Stomach (tissue), 19 donors: ENCODE measurements at regions of chr6 and their contacts with region 1.

Region 1: GRCh38 chr6:25193460-25194171 is 85.6 kb upstream of the CARMIL1 start:
- DNase-seq: peak in 1 of 2 donors; percentile 74
- H3K4me3 ChIP-seq: no peak overlapping the region
- H3K27ac ChIP-seq: peak overlapping the region in 4 of 5 donors; percentile 56 to 75 (median 69)
- H3K4me1 ChIP-seq: peaks cover 0 to 13% (median 6%) of the 10 kb centered on the region in 4 donors
- H3K27me3 ChIP-seq: no peaks in the 10 kb centered on the region
- CTCF ChIP-seq: no peak
- EP300 ChIP-seq: no peak
- POLR2A ChIP-seq: no peak

Region 2: GRCh38 chr6:25138237-25139125 is 55.1 kb before region 1 on chr6:
- intact Hi-C with region 1: loop called (anchors 10 kb)
- DNase-seq: peak; percentile 51 to 82
- H3K4me3 ChIP-seq: peak overlapping the region; percentile 37 to 53 (median 48)
- H3K27ac ChIP-seq: peak overlapping the region; percentile 77 to 93 (median 84)
- H3K4me1 ChIP-seq: peaks cover 0 to 34% (median 19%) of the 10 kb centered on the region in 4 donors
- H3K27me3 ChIP-seq: no peaks in the 10 kb centered on the region
- CTCF ChIP-seq: peak in 1 of 7 experiments; percentile 17
- EP300 ChIP-seq: no peak
- POLR2A ChIP-seq: no peak